CD8-positive, alpha-beta T cell (primary cell): ENCODE measurements at regions of chrX and their contacts with region 1.

Region 1: DNA sequence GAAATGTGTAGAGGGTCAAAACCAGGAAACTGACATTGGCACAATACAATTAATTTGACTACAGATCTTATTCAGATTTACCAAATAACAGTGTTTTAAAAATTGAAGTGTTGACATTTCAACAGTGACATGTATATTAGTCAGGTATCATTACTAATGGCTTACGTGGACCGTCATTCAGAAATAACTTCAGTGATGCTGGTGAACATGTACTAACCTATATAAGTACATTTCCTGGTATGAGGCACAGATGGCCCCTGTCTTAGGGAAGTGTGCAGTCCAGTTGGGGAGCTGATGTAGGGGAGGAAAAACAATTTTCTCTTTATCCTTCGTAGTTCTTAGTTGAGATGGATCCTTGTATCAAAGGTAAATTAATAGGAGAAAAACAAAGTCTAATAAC is 22.3 kb upstream of the MAOA start:
- DNase-seq: no peak
- ATAC-seq: no peak
- H3K4me3 ChIP-seq: no peak overlapping the region
- H3K4me3 Mint-ChIP-seq: no peak overlapping the region
- H3K27ac ChIP-seq: no peak overlapping the region
- H3K27ac Mint-ChIP-seq: no peak overlapping the region
- H3K4me1 ChIP-seq: no peaks in the 10 kb centered on the region
- H3K4me1 Mint-ChIP-seq: no peaks in the 10 kb centered on the region
- H3K27me3 ChIP-seq: no peaks in the 10 kb centered on the region
- H3K27me3 Mint-ChIP-seq: peaks cover 3% of the 10 kb centered on the region
- CTCF ChIP-seq: no peak

Region 2: DNA sequence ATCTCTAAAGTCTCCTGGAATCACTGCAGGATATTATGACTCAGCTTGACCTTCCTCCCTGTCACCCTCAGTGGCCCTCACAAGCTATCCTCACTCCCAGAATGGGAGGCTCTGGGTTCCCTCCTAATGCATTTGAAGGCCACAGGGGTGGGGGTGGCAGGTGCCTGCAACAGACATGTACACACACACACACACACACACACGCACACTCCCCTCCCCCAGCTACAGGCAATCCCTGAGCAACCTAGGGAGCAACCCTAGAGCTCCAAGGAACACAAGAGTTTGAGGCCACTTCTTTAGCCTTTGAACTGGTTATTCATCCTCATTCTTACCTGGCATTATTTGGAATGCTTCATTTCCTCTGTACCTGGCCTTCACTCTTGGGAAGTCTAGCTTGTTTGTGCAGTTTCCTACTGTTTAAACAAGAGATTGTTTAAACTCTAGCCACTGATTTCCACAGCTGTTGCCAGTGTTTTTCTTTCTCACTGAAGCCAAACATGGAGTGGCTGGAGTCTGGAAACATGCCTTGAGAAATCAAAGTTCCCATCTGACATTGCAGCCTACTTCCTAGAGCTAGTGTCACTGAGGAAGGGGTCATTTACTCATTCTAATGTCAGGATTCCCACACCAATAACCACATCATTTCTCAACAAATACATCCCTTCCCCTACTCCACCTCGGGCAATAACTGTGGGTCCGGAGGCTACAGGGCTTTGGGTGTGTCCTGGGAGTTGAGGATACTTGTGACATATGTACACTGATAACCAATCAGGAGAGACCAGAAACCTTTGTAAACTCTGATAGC is 60.0 kb after region 1 on chrX:
- CTCF ChIA-PET with region 1: no interaction called
- POLR2A ChIA-PET with region 1: no interaction called
- intact Hi-C with region 1: loop called in 1 of 2 experiments (anchors 10 kb)
- DNase-seq: no peak
- ATAC-seq: no peak
- H3K4me3 ChIP-seq: no peak overlapping the region
- H3K4me3 Mint-ChIP-seq: no peak overlapping the region
- H3K27ac ChIP-seq: no peak overlapping the region
- H3K27ac Mint-ChIP-seq: no peak overlapping the region
- H3K4me1 ChIP-seq: no peaks in the 10 kb centered on the region
- H3K4me1 Mint-ChIP-seq: no peaks in the 10 kb centered on the region
- H3K27me3 ChIP-seq: no peaks in the 10 kb centered on the region
- H3K27me3 Mint-ChIP-seq: no peaks in the 10 kb centered on the region
- CTCF ChIP-seq: no peak